WTC11 (cell line): ENCODE measurements at regions of chr22 and their contacts with region 1.

Region 1: DNA sequence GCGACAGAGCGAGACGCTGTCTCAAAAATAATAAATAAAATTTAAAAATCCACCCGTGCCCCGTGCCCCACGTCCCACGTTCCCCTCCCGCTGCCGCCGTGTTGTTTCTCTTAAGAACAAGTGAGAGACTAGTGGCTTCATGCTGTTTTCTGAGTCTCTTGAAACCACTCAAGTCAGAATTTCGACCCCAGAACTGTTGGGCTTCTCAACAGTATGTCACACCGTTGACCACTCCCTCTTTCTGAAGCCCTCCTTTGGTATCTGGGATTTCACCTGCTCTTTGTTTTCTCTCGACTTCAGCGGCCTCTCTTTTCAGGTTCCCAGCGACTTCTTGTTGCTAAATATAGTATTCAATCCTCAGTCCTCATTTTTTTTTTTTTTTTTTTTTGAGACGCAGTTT is 974 bp downstream of the PPIL2 start:
- DNase-seq: no peak
- ATAC-seq: no peak
- H3K4me3 Mint-ChIP-seq: peak overlapping the region; percentile 97
- H3K27ac Mint-ChIP-seq: peak overlapping the region; percentile 95
- H3K4me1 Mint-ChIP-seq: peaks cover 14% of the 10 kb centered on the region
- H3K27me3 Mint-ChIP-seq: peaks cover 3% of the 10 kb centered on the region
- CTCF ChIP-seq: no peak

Region 2: GRCh38 chr22:21691816-21692215 is 25.0 kb after region 1 on chr22:
- CTCF ChIA-PET with region 1: interaction called, 10 read pairs
- POLR2A ChIA-PET with region 1: no interaction called
- DNase-seq: no peak
- ATAC-seq: no peak
- H3K4me3 Mint-ChIP-seq: no peak overlapping the region
- H3K27ac Mint-ChIP-seq: no peak overlapping the region; the same call in 1 of the 2 replicates
- H3K4me1 Mint-ChIP-seq: no peaks in the 10 kb centered on the region
- H3K27me3 Mint-ChIP-seq: no peaks in the 10 kb centered on the region
- CTCF ChIP-seq: no peak